Endothelial cell of umbilical vein (primary cell): ENCODE measurements at regions of chr9 and their contacts with region 1.

Region 1: DNA sequence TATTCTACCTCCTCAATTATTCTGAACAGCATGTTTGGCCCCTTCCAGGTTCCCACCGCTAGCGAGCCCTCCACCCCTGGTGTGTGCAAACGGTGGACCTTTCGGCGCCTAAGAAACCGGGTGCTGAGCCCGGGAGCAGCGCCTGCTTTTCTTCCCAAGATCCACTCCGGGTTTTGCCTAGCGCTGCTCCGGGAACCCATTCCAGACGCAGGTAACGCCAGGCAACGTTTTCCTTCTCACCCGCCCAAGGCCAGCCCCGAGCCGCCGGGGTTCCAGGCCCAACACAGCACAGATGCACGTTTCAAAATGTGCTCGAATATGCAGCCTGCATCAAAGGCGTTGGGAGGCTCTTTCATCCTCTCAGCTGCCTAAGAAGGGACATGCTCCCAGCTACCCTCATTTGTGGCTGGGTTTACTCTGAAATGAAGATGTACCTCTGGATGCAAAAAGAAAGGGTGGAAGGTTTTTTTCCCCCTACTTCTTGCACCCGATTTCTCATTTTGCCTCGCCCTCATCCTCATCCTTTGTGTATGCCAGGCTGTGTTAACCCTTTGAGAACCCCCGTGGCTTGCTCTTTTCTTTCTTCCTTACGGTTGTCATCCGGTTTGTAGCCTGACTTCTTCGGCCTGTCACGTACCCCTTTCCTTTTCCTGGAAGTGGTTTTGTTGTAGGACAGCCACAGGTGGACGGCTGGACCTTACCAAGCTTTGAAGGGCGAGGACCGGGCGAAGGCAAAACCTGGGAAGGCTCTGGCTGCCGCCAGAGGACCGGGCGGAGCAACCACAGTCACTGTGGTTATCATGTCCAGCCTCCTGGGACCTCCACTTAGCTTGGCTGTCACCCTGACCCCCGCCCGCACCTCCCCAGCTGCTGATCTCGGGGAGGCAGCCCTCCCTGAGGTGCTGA is 226.9 kb downstream of the SMARCA2 start:
- DNase-seq: peak; percentile 87
- H3K4me3 ChIP-seq: peak overlapping the region; percentile 31 to 67 (median 36)
- H3K27ac ChIP-seq: no peak overlapping the region
- H3K4me1 ChIP-seq: peaks cover 14% of the 10 kb centered on the region
- H3K27me3 ChIP-seq: peaks cover 0 to 2% of the 10 kb centered on the region in 2 experiments
- CTCF ChIP-seq: no peak
- POLR2A ChIP-seq: peak; percentile 77

Region 2: GRCh38 chr9:1701113-1701512 is 541.0 kb before region 1 on chr9:
- CTCF ChIA-PET with region 1: no interaction called
- POLR2A ChIA-PET with region 1: no interaction called
- dilution Hi-C with region 1: no loop called
- intact Hi-C with region 1: no loop called
- DNase-seq: no peak
- H3K4me3 ChIP-seq: no peak overlapping the region
- H3K27ac ChIP-seq: no peak overlapping the region
- H3K4me1 ChIP-seq: no peaks in the 10 kb centered on the region
- H3K27me3 ChIP-seq: no peaks in the 10 kb centered on the region
- CTCF ChIP-seq: no peak
- POLR2A ChIP-seq: no peak

Region 3: GRCh38 chr9:2132484-2133082 is 109.5 kb before region 1 on chr9:
- CTCF ChIA-PET with region 1: interaction called, 9 read pairs
- POLR2A ChIA-PET with region 1: no interaction called
- dilution Hi-C with region 1: no loop called
- intact Hi-C with region 1: loop called (anchors 5 kb)
- DNase-seq: peak; percentile 42
- H3K4me3 ChIP-seq: no peak overlapping the region
- H3K27ac ChIP-seq: no peak overlapping the region
- H3K4me1 ChIP-seq: peaks cover 15% of the 10 kb centered on the region
- H3K27me3 ChIP-seq: no peaks in the 10 kb centered on the region
- CTCF ChIP-seq: peak; percentile 40 to 48
- POLR2A ChIP-seq: no peak

Region 4: DNA sequence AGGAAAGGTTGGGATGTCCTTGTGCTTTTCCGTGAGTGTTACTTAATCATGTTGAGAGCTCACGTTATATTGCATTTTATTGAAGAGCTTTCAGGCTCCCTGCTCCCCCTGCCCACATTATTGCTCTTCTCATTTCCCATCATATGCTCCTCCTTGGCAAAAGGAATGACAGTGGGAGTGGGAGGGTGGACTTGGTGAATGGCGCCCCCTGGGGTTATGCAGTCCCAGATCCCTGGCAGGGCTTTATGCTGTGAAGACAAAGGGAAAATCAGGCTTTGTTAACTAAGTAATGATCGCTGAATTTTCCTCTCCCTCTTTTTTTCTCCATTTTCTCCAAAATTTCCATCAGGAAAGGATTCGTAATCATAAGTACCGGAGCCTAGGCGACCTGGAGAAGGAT is 60.3 kb before region 1 on chr9:
- CTCF ChIA-PET with region 1: no interaction called
- POLR2A ChIA-PET with region 1: no interaction called
- dilution Hi-C with region 1: no loop called
- intact Hi-C with region 1: no loop called
- DNase-seq: peak; percentile 36
- H3K4me3 ChIP-seq: no peak overlapping the region
- H3K27ac ChIP-seq: no peak overlapping the region
- H3K4me1 ChIP-seq: no peaks in the 10 kb centered on the region
- H3K27me3 ChIP-seq: no peaks in the 10 kb centered on the region
- CTCF ChIP-seq: peak; percentile 54 to 60
- POLR2A ChIP-seq: no peak

Region 5: DNA sequence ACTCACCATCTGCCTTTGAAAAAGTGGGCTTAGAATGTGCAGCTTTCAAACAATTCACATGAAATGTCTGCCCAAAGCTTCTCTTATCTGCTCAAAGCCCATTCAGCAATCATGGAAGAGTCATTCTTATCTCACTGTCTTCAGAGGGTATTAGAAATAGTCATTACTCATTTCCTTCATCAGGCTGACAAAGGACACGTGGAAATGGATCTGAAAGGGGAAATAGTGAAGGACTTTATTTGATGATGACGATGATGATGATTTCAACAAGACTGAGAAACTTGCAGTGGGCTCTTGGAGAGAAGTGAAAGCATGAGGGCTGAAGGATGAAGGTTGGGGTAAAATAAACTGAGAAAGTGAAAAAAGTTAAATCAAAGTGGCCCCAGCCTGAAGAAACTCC is 32.7 kb before region 1 on chr9:
- CTCF ChIA-PET with region 1: interaction called, 6 read pairs
- POLR2A ChIA-PET with region 1: no interaction called
- dilution Hi-C with region 1: no loop called
- intact Hi-C with region 1: loop called (anchors 5 kb)
- DNase-seq: peak; percentile 54
- H3K4me3 ChIP-seq: no peak overlapping the region
- H3K27ac ChIP-seq: no peak overlapping the region
- H3K4me1 ChIP-seq: peaks cover 13% of the 10 kb centered on the region
- H3K27me3 ChIP-seq: no peaks in the 10 kb centered on the region
- CTCF ChIP-seq: no peak
- POLR2A ChIP-seq: no peak

Region 6: DNA sequence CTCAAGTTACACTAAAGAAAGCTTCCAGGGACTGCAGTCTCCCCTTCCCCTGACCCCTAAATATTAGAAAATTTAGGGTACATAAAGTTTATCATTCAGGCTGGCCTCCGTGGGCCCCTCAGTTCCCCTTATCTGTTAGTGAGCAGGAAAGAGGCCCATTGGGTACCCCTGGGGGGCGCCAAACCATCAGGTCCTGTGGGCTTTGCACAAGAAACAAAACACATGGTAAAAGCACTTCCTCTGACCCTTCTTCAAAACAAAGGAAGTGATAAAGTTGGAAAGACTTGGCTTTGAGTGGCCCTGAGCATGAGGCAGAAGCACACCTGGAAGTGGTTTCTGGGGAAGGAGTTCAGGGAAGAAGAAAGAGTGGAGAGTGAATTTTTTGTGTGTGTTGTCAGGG is 14.0 kb before region 1 on chr9:
- CTCF ChIA-PET with region 1: interaction called, 17 read pairs
- POLR2A ChIA-PET with region 1: no interaction called
- dilution Hi-C with region 1: no loop called
- intact Hi-C with region 1: no loop called
- DNase-seq: peak; percentile 18
- H3K4me3 ChIP-seq: no peak overlapping the region
- H3K27ac ChIP-seq: no peak overlapping the region
- H3K4me1 ChIP-seq: no peaks in the 10 kb centered on the region
- H3K27me3 ChIP-seq: no peaks in the 10 kb centered on the region
- CTCF ChIP-seq: peak; percentile 7 to 34
- POLR2A ChIP-seq: no peak

Region 7: DNA sequence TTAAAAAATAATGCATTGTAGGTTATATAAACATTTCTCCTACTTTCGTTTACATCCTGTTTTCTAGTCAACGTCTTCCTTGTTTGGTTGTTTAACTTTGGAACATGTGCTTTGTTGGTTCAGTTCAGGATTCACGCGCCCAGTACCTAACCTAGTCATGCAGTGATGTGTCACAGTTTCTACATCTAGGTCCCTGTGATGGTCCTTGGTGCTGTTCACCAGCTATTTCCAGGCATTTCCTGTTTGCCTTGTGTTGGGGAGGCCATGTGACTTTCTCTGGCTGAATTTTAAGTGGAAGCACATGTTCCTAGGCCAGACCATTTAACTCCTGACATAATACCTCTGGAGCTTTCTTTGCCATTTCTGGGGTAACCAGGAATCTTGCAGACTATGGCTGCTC is 65.4 kb after region 1 on chr9:
- CTCF ChIA-PET with region 1: no interaction called
- POLR2A ChIA-PET with region 1: no interaction called
- dilution Hi-C with region 1: no loop called
- intact Hi-C with region 1: no loop called
- DNase-seq: peak; percentile 8
- H3K4me3 ChIP-seq: no peak overlapping the region
- H3K27ac ChIP-seq: no peak overlapping the region
- H3K4me1 ChIP-seq: no peaks in the 10 kb centered on the region
- H3K27me3 ChIP-seq: no peaks in the 10 kb centered on the region
- CTCF ChIP-seq: no peak
- POLR2A ChIP-seq: no peak

Region 8: DNA sequence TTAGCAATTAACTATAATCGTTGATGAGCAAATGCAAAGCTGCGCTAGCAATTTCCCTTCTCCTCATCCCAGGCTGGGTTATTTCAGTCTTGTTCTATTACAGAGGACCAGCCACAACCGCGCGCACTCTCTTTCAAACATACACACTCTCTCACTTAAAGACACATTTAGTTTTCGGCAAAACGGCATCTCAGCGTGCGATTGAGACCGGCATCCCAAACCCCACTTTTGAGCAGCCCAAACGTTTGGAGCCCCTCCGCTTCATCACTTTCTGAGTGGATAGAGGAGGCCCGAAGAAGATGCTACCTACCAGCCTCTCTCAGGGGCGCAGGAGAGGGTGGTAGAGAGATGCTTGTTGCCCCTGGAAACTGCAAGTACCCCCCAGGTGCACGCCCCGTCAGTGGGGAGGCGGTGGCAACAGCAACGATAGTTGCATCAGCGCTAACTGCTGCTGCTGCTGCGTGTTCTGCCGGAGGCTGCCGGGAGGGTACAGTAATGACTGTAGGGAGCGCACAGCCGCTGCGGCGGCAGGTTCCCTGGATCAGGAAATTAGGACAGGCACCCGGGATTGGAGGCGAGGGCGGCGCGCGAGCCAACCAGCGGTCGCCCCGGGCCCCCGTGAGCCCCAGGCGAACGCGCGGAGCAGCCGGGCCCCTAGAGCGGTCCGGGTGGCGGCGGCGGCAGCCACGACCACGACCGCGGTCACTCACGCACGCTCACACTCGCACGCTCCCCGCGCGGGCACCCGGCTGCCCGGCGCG is 379.0 kb after region 1 on chr9:
- CTCF ChIA-PET with region 1: no interaction called
- POLR2A ChIA-PET with region 1: no interaction called
- dilution Hi-C with region 1: no loop called
- intact Hi-C with region 1: loop called (anchors 2 kb)
- DNase-seq: peak; percentile 58
- H3K4me3 ChIP-seq: peak overlapping the region; percentile 2 to 42 (median 42)
- H3K27ac ChIP-seq: no peak overlapping the region
- H3K4me1 ChIP-seq: peaks cover 13% of the 10 kb centered on the region
- H3K27me3 ChIP-seq: peaks cover 38 to 57% of the 10 kb centered on the region in 2 experiments
- CTCF ChIP-seq: no peak
- POLR2A ChIP-seq: no peak